ENCODE measurements at regions of chr1 and their contacts with region 1.

Region 1: GRCh38 chr1:3483801-3484444 is 29.5 kb downstream of the ARHGEF16 start:
- DNase-seq: peak; percentile 53
- ATAC-seq: peak in 1 of 2 donors; percentile 35

Region 2: GRCh38 chr1:3453203-3453761 is 30.6 kb before region 1 on chr1:
- intact Hi-C with region 1: loop called in 1 of 2 experiments (anchors 1 kb)
- DNase-seq: peak; percentile 75
- ATAC-seq: peak; percentile 73 to 83